PC-9 (cell line): ENCODE measurements at regions of chr16 and their contacts with region 1.

Region 1: GRCh38 chr16:68760671-68761275 is 23.7 kb downstream of the CDH1 start:
- DNase-seq: peak; percentile 73 to 85
- H3K4me3 ChIP-seq: no peak overlapping the region
- H3K27ac ChIP-seq: peak overlapping the region; percentile 81
- H3K4me1 ChIP-seq: peaks cover 36% of the 10 kb centered on the region
- H3K27me3 ChIP-seq: no peaks in the 10 kb centered on the region
- CTCF ChIP-seq: no peak

Region 2: DNA sequence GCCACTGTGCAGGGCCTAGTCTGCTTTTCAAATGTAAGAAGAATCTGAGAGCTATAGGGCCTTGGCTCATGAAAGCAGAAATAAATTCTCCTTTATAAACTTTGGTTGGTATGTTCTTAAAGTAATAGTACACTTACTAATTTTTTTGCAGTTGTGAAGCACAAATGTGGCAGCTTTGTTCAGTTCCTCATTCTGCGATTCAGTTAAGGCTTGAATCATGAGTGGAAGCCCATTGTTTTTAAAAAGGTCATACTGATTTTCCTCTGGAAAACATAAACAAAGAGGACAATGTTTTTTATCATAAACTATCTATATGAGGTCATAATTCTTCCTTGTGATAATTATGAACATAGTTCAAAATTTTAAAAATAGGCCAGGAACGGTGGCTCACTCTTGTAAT is 1985.8 kb before region 1 on chr16:
- CTCF ChIA-PET with region 1: no interaction called
- POLR2A ChIA-PET with region 1: no interaction called
- intact Hi-C with region 1: no loop called
- DNase-seq: no peak
- H3K4me3 ChIP-seq: no peak overlapping the region
- H3K27ac ChIP-seq: no peak overlapping the region
- H3K4me1 ChIP-seq: no peaks in the 10 kb centered on the region
- H3K27me3 ChIP-seq: no peaks in the 10 kb centered on the region
- CTCF ChIP-seq: no peak

Region 3: GRCh38 chr16:68732036-68732680 is 28.6 kb before region 1 on chr16:
- CTCF ChIA-PET with region 1: no interaction called
- POLR2A ChIA-PET with region 1: interaction called, 3 read pairs
- intact Hi-C with region 1: loop called (anchors 2 kb)
- DNase-seq: peak; percentile 85 to 92
- H3K4me3 ChIP-seq: peak overlapping the region; percentile 22; the same call in 1 of the 2 replicates
- H3K27ac ChIP-seq: peak overlapping the region; percentile 67
- H3K4me1 ChIP-seq: peaks cover 22% of the 10 kb centered on the region
- H3K27me3 ChIP-seq: no peaks in the 10 kb centered on the region
- CTCF ChIP-seq: no peak

Region 4: DNA sequence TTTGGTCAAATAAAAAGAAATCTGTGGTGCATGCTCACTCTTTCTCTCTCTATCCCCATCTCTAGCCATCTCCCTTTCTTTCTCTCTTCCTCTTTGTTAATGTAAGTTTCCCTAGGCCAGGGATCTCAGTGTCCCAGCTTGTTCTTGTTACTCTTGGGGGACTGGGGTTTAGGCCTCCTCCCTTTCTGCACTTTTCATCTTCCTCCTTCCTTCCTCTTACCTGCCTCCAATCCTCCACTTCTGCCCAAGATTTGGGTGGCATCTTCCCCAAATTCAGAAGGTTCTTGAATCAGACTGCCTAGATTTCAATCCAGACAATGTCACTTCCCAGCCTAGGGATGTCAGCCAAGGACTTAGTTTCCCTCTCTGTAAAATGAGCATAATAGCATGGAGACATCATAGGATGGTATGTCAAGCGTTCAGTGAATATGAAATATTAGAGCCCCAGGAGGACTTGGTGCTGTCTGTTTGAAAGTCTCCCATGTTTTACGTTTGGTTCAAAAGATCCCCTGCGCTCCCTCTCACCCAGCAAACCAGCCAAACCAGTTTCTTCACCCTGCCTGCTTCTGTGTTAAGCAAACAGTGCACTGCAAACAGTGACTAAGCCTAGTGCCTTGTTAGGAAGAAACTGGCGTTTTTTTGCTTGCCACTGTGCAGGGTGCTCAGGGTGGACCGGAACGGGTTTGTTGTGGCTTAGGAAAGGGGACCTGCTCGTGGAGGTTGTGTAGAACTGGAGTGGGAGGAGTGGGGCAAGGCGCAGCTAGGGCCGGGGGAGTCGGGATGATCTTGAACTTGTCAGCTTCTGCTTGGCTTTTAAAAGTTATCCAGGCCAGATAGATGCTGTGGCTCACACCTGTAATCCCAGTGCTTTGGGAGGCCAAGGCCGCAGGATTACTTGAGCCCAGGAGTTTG is 16.1 kb before region 1 on chr16:
- CTCF ChIA-PET with region 1: no interaction called
- POLR2A ChIA-PET with region 1: interaction called, 5 read pairs
- intact Hi-C with region 1: loop called (anchors 2 kb)
- DNase-seq: peak; percentile 82 to 98
- H3K4me3 ChIP-seq: peak overlapping the region; percentile 49; the same call in 1 of the 2 replicates
- H3K27ac ChIP-seq: peak overlapping the region; percentile 95
- H3K4me1 ChIP-seq: peaks cover 92% of the 10 kb centered on the region
- H3K27me3 ChIP-seq: no peaks in the 10 kb centered on the region
- CTCF ChIP-seq: no peak

Region 5: DNA sequence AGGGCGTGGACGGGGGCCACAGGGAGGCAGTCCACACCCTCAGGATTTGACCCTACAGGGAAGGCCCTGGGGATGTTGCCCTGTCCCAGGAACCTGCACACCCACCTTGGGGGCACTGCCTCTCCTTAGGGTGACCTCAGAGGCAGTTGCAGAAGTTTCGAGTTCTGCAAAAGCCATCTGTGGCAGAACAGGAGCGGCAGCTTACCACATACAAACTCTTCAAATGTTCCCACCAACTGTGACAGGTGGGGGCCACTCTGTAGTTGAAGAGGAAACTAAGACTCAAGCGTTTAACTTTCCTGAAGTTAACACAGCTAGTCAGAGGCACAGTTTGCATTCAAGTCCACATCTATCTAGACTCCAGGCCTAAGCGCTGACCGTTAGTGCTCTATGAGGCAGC is 21.4 kb after region 1 on chr16:
- CTCF ChIA-PET with region 1: no interaction called
- POLR2A ChIA-PET with region 1: no interaction called
- intact Hi-C with region 1: loop called (anchors 2 kb)
- DNase-seq: no peak
- H3K4me3 ChIP-seq: no peak overlapping the region
- H3K27ac ChIP-seq: no peak overlapping the region
- H3K4me1 ChIP-seq: peaks cover 28% of the 10 kb centered on the region
- H3K27me3 ChIP-seq: no peaks in the 10 kb centered on the region
- CTCF ChIP-seq: no peak

Region 6: DNA sequence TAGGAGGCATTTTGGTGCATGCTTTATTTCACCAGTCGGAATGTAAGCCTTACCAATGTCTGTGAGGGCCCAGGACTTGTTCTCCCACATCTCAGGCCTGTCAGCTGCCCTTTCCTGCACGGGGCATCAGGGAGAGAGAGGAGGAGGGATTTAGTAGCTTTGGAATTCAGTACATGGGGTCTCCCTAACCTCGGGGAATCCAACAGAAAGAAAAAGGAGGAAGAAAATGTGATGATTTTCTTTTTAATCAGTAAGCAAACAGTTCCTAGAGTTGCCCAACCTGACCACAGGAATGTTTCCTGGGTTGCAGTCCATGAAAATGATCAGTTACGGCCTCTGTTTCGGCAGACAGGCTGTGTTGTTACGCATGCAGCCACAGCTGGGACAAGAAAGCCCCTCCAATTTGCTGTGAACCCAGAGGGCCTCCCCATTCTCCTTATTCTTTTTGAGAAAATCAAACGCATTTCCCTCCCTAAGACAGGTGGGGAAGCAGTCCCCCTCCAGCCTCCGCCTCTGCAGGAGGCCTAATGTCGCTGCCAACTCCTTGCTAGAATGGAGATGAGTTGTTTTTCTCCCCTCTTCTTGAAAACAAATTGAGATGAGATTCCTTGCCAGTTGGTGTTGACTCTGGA is 29.5 kb after region 1 on chr16:
- CTCF ChIA-PET with region 1: interaction called, 9 read pairs
- POLR2A ChIA-PET with region 1: no interaction called
- intact Hi-C with region 1: loop called (anchors 1 kb)
- DNase-seq: peak; percentile 80 to 97
- H3K4me3 ChIP-seq: peak overlapping the region; percentile 3; the same call in 1 of the 2 replicates
- H3K27ac ChIP-seq: peak overlapping the region; percentile 48
- H3K4me1 ChIP-seq: peaks cover 57% of the 10 kb centered on the region
- H3K27me3 ChIP-seq: no peaks in the 10 kb centered on the region
- CTCF ChIP-seq: no peak

Region 7: GRCh38 chr16:69089091-69089910 is 328.5 kb after region 1 on chr16:
- CTCF ChIA-PET with region 1: no interaction called
- POLR2A ChIA-PET with region 1: no interaction called
- intact Hi-C with region 1: no loop called
- DNase-seq: peak; percentile 55 to 62
- H3K4me3 ChIP-seq: peak overlapping the region; percentile 11; the same call in 1 of the 2 replicates
- H3K27ac ChIP-seq: no peak overlapping the region
- H3K4me1 ChIP-seq: peaks cover 23% of the 10 kb centered on the region
- H3K27me3 ChIP-seq: no peaks in the 10 kb centered on the region
- CTCF ChIP-seq: no peak